A549 (cell line): ENCODE measurements at regions of chr1 and their contacts with region 1.

Region 1: GRCh38 chr1:156689035-156689952 is 12.1 kb upstream of the NES start:
- DNase-seq: peak; percentile 86 to 92
- ATAC-seq: peak; percentile 88 to 93
- H3K4me3 ChIP-seq: peak overlapping the region; percentile 36
- H3K27ac ChIP-seq: peak overlapping the region; percentile 57 to 78; a peak in 5 of 6 replicates
- H3K4me1 ChIP-seq: peaks cover 55% of the 10 kb centered on the region
- CTCF ChIP-seq: peak; percentile 77
- EP300 ChIP-seq: no peak
- POLR2A ChIP-seq: no peak
- RAD21 ChIP-seq: peak; percentile 91 to 97

Region 2: DNA sequence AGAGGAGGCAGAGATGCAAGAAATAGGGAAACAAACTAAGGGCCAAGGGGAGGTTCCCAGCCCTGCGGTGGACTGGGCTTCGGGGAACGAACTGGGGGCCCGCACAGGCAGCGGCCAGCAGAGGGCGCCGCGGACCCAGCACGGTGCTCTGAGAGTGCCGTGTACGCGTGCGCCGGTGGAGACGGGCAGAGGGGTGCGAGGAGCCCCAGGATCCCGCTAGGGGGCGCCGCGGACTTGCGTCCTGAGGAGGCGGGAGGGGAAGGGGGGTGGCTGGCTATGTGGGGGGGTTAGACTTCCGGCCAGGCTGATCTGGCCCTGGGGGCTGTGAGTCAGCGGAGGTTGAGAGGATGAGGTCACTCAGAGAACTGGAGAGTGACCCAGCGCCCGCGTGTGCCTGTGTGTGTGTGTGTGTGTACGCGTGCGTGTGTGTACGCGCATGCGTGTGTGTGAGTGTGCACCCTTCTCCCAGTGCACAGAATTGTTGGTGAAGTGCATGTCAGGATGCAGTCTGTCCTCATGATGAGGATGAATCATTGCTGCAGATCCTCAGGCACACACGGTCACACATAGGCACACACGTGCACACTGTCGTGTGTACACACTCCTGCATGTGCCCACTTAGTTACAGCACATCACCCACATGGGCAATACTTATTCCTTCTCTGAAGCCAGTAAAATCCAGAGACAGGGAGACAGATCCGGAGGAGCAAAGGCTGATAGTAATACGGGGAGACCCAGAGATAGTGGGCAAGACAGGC is 29.1 kb before region 1 on chr1:
- CTCF ChIA-PET with region 1: interaction called, 87 read pairs
- POLR2A ChIA-PET with region 1: interaction called, 7 read pairs
- DNase-seq: peak; percentile 98
- ATAC-seq: peak; percentile 70 to 83
- H3K4me3 ChIP-seq: peak overlapping the region; percentile 77
- H3K27ac ChIP-seq: peak overlapping the region; percentile 97
- H3K4me1 ChIP-seq: peaks cover 65% of the 10 kb centered on the region
- CTCF ChIP-seq: peak; percentile 99
- EP300 ChIP-seq: peak in 1 of 2 experiments; percentile 62; a peak in 2 of 5 replicates
- POLR2A ChIP-seq: peak; percentile 44; the same call in 1 of the 2 replicates
- RAD21 ChIP-seq: peak; percentile 78 to 91

Region 3: GRCh38 chr1:156740679-156741612 is 51.7 kb after region 1 on chr1 and contains the start of gene MRPL24:
- CTCF ChIA-PET with region 1: interaction called, 2,258 read pairs
- POLR2A ChIA-PET with region 1: no interaction called
- DNase-seq: peak; percentile 97 to 100
- ATAC-seq: peak; percentile 92 to 93
- H3K4me3 ChIP-seq: peak within 1 kb of the TSS; percentile 66
- H3K27ac ChIP-seq: peak within 1 kb of the TSS; percentile 88 to 94
- H3K4me1 ChIP-seq: peaks cover 30% of the 10 kb centered on the region
- CTCF ChIP-seq: no peak
- EP300 ChIP-seq: no peak
- POLR2A ChIP-seq: peak; percentile 57
- RAD21 ChIP-seq: no peak
- polyA plus RNA-seq, gene MRPL24: 170 and 246 TPM in 2 replicates

Region 4: DNA sequence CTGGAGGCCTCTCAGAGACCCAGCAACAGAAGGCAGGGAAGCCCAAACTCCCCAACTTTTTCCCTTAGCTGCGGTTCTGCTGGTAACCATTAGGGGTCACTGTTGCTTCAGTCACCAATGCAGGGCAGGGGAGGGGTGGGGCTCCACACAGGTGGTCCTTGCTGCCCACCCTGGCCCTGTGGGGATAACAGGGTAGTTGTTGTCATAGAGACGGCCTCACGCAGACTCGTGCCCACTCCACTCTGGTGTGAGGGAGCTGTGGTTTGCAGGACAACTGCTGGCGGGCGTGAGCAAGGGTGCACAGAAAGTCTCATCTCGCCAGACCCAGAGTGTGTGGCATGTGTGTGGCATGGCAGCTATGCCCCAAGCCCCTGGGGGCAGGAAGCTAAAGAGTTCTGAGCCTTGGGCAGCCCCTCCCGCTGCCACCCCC is 149.7 kb after region 1 on chr1:
- CTCF ChIA-PET with region 1: interaction called, 11 read pairs
- POLR2A ChIA-PET with region 1: no interaction called
- DNase-seq: peak in 1 of 2 experiments; percentile 72
- ATAC-seq: peak; percentile 60 to 85; a peak in 5 of 6 replicates
- H3K4me3 ChIP-seq: no peak overlapping the region
- H3K27ac ChIP-seq: no peak overlapping the region
- H3K4me1 ChIP-seq: no peaks in the 10 kb centered on the region
- CTCF ChIP-seq: peak; percentile 81
- EP300 ChIP-seq: no peak
- POLR2A ChIP-seq: no peak
- RAD21 ChIP-seq: peak; percentile 83 to 87

Region 5: GRCh38 chr1:156876281-156876680 is 187.0 kb after region 1 on chr1:
- CTCF ChIA-PET with region 1: interaction called, 18 read pairs
- POLR2A ChIA-PET with region 1: no interaction called
- DNase-seq: no peak
- ATAC-seq: peak in 1 of 2 experiments; percentile 52; a peak in 3 of 6 replicates
- H3K4me3 ChIP-seq: no peak overlapping the region
- H3K27ac ChIP-seq: no peak overlapping the region
- H3K4me1 ChIP-seq: peaks cover under 1% of the 10 kb centered on the region; the same call in 1 of the 3 replicates
- CTCF ChIP-seq: no peak
- EP300 ChIP-seq: no peak
- POLR2A ChIP-seq: no peak
- RAD21 ChIP-seq: no peak